CD14-positive monocyte (primary cell): ENCODE measurements at regions of chr7 and their contacts with region 1.

Region 1: GRCh38 chr7:129210256-129210988 is 14.4 kb upstream of the AHCYL2 start:
- DNase-seq: peak; percentile 42 to 60 (median 54)
- H3K4me3 ChIP-seq: no peak overlapping the region
- H3K4me3 Mint-ChIP-seq: no peak overlapping the region
- H3K27ac ChIP-seq: no peak overlapping the region
- H3K27ac Mint-ChIP-seq: no peak overlapping the region
- H3K4me1 ChIP-seq: no peaks in the 10 kb centered on the region
- H3K4me1 Mint-ChIP-seq: peaks cover 9% of the 10 kb centered on the region
- H3K27me3 ChIP-seq: no peaks in the 10 kb centered on the region
- H3K27me3 Mint-ChIP-seq: peaks cover 3 to 12% (median 4%) of the 10 kb centered on the region in 3 donors
- CTCF ChIP-seq: peak; percentile 92

Region 2: DNA sequence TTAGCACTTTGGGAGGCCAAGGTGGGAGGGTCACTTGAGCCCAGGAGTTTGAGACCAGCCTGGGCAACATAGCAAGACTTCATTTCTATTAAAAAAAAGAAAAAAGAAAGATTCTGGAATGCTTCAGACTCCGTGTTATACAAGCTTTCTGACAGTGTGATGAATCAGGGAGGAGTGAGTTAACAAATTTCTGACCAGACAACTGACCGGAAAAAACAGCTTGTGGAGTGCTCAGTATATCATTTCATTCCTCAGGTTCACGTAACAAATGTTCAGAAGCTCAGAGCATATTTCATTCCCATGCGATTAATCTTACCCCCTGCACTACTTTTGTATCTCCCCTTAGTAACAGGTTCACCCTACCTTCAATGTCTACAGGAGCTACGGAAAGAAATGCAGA is 126.9 kb before region 1 on chr7:
- intact Hi-C with region 1: no loop called
- DNase-seq: no peak
- H3K4me3 ChIP-seq: no peak overlapping the region
- H3K4me3 Mint-ChIP-seq: no peak overlapping the region
- H3K27ac ChIP-seq: no peak overlapping the region
- H3K27ac Mint-ChIP-seq: no peak overlapping the region
- H3K4me1 ChIP-seq: peaks cover 4 to 5% of the 10 kb centered on the region in 2 donors
- H3K4me1 Mint-ChIP-seq: peaks cover 5% of the 10 kb centered on the region
- H3K27me3 ChIP-seq: no peaks in the 10 kb centered on the region
- H3K27me3 Mint-ChIP-seq: peaks cover 0 to 3% (median 2%) of the 10 kb centered on the region in 3 donors
- CTCF ChIP-seq: no peak

Region 3: GRCh38 chr7:129163875-129164544 is 46.4 kb before region 1 on chr7:
- intact Hi-C with region 1: loop called (anchors 1 to 5 kb)
- DNase-seq: peak in 2 of 3 donors; percentile 50 to 62
- H3K4me3 ChIP-seq: no peak overlapping the region
- H3K4me3 Mint-ChIP-seq: no peak overlapping the region
- H3K27ac ChIP-seq: no peak overlapping the region
- H3K27ac Mint-ChIP-seq: no peak overlapping the region
- H3K4me1 ChIP-seq: peaks cover 2% of the 10 kb centered on the region in 2 donors
- H3K4me1 Mint-ChIP-seq: peaks cover 6% of the 10 kb centered on the region
- H3K27me3 ChIP-seq: no peaks in the 10 kb centered on the region
- H3K27me3 Mint-ChIP-seq: peaks cover 0 to 2% (median 2%) of the 10 kb centered on the region in 3 donors
- CTCF ChIP-seq: peak; percentile 96

Region 4: DNA sequence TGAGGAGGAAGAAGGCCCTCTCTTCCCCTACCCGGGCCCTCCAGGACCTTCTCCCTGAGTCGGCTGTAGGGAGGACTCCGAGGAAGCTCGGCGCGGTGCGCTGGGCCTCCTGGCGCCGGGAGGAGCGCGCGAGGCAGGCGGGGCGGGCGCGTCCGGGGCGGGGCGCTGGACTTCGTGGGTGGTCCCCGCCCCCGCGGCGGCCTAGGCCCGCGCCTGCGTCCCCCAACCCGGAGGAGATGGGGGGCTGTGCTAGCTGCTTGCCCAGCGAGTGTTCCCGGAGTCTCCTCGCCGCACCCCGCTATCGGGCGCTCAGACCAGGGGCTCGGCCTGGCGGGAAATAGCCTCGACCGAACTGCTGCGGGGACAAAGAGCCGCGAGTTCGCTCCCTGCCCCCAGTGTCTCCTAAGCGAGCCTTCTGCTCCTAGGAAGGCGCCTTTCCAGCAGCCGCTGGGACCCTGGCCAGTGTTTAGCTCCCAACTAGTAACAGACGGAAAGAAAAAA is 41.2 kb before region 1 on chr7:
- intact Hi-C with region 1: loop called (anchors 1 to 5 kb)
- DNase-seq: no peak
- H3K4me3 ChIP-seq: peak overlapping the region; percentile 57 to 84 (median 67)
- H3K4me3 Mint-ChIP-seq: peak overlapping the region; percentile 85 to 93
- H3K27ac ChIP-seq: peak overlapping the region in 1 of 2 donors; percentile 1
- H3K27ac Mint-ChIP-seq: peak overlapping the region in 5 of 7 donors; percentile 50 to 79 (median 59)
- H3K4me1 ChIP-seq: peaks cover 14 to 19% of the 10 kb centered on the region in 2 donors
- H3K4me1 Mint-ChIP-seq: peaks cover 19% of the 10 kb centered on the region
- H3K27me3 ChIP-seq: no peaks in the 10 kb centered on the region
- H3K27me3 Mint-ChIP-seq: peaks cover 2 to 4% (median 4%) of the 10 kb centered on the region in 3 donors
- CTCF ChIP-seq: no peak

Region 5: DNA sequence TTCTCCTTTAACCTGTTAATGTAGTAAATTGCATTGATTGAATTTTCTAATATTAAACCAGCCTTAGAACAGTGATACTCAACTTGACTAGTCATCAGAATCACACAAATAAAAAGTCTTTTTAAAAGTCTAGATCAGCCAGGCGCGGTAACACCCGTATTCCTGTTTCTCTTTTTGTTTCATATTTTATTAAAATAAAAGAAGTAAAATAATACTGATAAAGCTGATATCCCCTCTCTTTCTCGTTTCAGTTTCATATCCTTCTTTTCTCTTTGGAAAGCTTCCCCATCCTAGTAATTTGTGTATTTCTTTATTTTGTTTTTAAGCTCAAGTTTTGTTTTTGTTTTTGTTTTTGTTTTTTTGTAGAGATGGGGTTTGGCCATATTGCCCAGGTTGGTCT is 12.7 kb before region 1 on chr7:
- intact Hi-C with region 1: no loop called
- DNase-seq: peak in 1 of 3 donors; percentile 9
- H3K4me3 ChIP-seq: peak overlapping the region in 1 of 3 experiments; percentile 47
- H3K4me3 Mint-ChIP-seq: peak overlapping the region in 1 of 2 donors; percentile 39
- H3K27ac ChIP-seq: peak overlapping the region in 1 of 2 donors; percentile 20
- H3K27ac Mint-ChIP-seq: peak overlapping the region in 2 of 7 donors; percentile 19 to 38
- H3K4me1 ChIP-seq: peaks cover 19% of the 10 kb centered on the region in 2 donors
- H3K4me1 Mint-ChIP-seq: peaks cover 23% of the 10 kb centered on the region
- H3K27me3 ChIP-seq: no peaks in the 10 kb centered on the region
- H3K27me3 Mint-ChIP-seq: peaks cover 0 to 2% (median 0%) of the 10 kb centered on the region in 3 donors
- CTCF ChIP-seq: no peak